ENCODE measurements at regions of chr7 and their contacts with region 1.

Region 1: GRCh38 chr7:136009488-136010079 is 32.4 kb upstream of the MTPN start:
- DNase-seq: no peak
- ATAC-seq: peak in 3 of 4 donors; percentile 61 to 72 (median 68)
- H3K4me3 ChIP-seq: no peak overlapping the region
- H3K27ac ChIP-seq: no peak overlapping the region
- H3K4me1 ChIP-seq: no peaks in the 10 kb centered on the region
- H3K27me3 ChIP-seq: peaks cover 0 to 3% (median 0%) of the 10 kb centered on the region in 4 donors
- CTCF ChIP-seq: peak; percentile 24 to 68 (median 38)

Region 2: DNA sequence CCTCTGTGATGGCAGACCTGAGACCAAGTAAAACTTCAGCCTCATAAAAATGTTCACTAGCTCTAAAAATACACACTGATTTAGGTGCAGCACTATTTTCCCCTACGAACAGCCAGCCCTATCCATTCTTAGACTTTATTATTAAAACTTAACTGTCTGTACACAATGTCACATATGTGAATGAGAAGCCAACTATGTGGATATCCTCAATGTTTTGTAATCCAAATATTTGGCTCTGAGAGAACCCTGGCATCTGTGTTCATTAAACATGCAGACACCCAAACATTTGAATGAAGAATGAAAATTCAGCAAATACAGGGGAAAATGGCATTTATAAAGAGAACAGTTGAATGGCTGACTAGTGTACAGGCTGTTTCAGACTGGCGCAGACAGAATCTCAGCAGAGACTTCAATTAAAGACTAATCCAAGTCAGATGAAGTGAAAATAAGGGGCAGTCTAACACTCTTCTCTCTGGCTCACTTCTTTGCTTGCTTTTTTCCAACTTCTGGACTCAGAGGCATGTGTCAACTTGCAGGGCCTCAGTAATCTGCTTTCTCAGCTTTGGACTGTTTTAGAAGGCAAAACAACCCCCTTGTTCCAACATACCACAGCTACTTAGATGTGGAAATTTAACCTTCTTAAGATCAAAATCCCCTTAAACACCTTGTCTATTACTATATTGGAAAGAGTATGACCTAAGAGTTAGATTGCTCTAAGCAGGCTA is 213.6 kb before region 1 on chr7:
- intact Hi-C with region 1: loop called in 2 of 3 experiments (anchors 5 to 10 kb)
- DNase-seq: no peak
- ATAC-seq: no peak
- H3K4me3 ChIP-seq: no peak overlapping the region
- H3K27ac ChIP-seq: no peak overlapping the region
- H3K4me1 ChIP-seq: peaks cover 0 to 4% (median 0%) of the 10 kb centered on the region in 3 donors
- H3K27me3 ChIP-seq: no peaks in the 10 kb centered on the region
- CTCF ChIP-seq: no peak

Region 3: DNA sequence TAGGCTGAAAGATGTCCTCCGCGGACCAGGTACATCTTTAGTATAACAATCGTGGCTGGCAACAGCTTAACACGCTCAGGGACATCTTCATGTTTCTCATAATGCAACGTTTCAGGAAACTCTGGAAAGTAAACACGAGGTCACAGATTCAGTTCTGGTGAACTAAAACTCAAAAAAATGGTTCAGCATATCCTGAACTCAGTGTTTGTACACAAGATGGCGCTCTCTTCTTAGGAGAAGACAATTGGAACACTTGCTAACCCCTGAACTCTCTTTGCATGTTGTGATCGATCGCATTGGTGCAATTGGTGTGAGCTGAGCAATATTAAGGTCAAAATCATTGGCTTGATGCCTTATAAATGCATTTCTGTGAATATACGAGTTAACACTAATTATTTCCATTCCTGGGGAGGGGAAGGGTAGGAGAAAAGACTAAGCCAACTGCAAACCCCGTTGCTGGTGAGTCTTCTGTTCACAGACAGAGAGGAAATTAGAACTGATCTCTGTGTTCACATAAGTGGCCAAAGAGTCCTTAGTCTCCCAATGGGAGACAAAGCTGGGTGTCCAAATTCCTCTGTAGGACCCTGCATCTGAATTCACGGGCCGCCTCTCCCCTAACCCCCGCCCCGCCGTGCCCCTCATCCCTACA is 208.4 kb before region 1 on chr7:
- intact Hi-C with region 1: loop called (anchors 5 to 10 kb)
- DNase-seq: peak in 3 of 6 donors; percentile 25 to 37 (median 29)
- ATAC-seq: peak; percentile 76 to 90 (median 86)
- H3K4me3 ChIP-seq: no peak overlapping the region
- H3K27ac ChIP-seq: no peak overlapping the region
- H3K4me1 ChIP-seq: peaks cover 0 to 4% (median 0%) of the 10 kb centered on the region in 3 donors
- H3K27me3 ChIP-seq: no peaks in the 10 kb centered on the region
- CTCF ChIP-seq: peak; percentile 35 to 70 (median 56)